Activated CD4-positive, alpha-beta T cell treated with anti-CD3 and anti-CD28 coated beads for 36 hours (primary cell): ENCODE measurements at regions of chr3 and their contacts with region 1.

Region 1: GRCh38 chr3:172530566-172530965 is 7.3 kb upstream of the TNFSF10 start:
- DNase-seq: peak; percentile 24
- ATAC-seq: peak; percentile 78
- H3K4me3 Mint-ChIP-seq: peak overlapping the region; percentile 15
- H3K27ac Mint-ChIP-seq: peak overlapping the region; percentile 48
- H3K4me1 Mint-ChIP-seq: peaks cover 22% of the 10 kb centered on the region
- H3K27me3 Mint-ChIP-seq: no peaks in the 10 kb centered on the region

Region 2: GRCh38 chr3:172511783-172512762 is 18.5 kb before region 1 on chr3:
- CTCF ChIA-PET with region 1: interaction called, 5 read pairs
- POLR2A ChIA-PET with region 1: no interaction called
- intact Hi-C with region 1: loop called in 1 of 2 experiments (anchors 1 kb)
- DNase-seq: peak; percentile 85
- ATAC-seq: peak; percentile 73
- H3K4me3 Mint-ChIP-seq: peak overlapping the region; percentile 67
- H3K27ac Mint-ChIP-seq: peak overlapping the region; percentile 92
- H3K4me1 Mint-ChIP-seq: peaks cover 63% of the 10 kb centered on the region
- H3K27me3 Mint-ChIP-seq: no peaks in the 10 kb centered on the region

Region 3: GRCh38 chr3:172550347-172550943 is 19.9 kb after region 1 on chr3:
- CTCF ChIA-PET with region 1: interaction called, 5 read pairs
- POLR2A ChIA-PET with region 1: interaction called, 3 read pairs
- intact Hi-C with region 1: loop called (anchors 1 to 2 kb)
- DNase-seq: peak; percentile 92
- ATAC-seq: peak; percentile 100
- H3K4me3 Mint-ChIP-seq: no peak overlapping the region
- H3K27ac Mint-ChIP-seq: peak overlapping the region; percentile 82
- H3K4me1 Mint-ChIP-seq: peaks cover 32% of the 10 kb centered on the region
- H3K27me3 Mint-ChIP-seq: no peaks in the 10 kb centered on the region

Region 4: DNA sequence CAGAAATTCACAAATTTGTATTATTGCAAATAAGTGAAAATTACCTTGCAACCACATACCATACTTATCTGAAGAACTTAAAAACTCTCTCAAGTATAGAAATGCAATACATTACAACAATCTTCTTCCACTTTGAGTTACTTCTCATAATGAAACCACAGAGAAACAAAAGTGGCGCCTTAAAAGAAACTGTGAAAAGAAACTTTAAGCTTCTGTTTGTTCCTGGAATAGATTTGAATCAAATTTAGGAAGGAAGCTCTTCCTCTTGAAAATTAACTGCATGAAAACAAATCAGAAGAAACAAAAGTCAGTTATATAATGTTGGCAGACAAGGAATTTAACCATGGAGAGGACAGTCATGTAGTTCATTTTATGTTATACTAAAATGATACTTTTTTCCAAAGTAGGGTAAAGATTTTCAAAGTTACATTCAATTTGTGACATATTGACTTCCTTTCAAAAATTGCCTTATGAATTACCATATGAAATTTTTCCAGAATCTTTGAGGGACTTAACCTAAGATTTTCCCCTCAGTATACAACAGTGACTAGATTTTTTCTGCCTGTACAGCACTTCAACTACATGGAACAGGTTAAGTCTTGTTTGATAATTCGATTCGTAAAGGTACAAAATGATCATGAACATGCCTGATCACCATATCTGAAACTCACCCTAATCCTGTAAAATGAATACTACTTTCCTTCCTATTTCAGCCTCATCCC is 50.3 kb after region 1 on chr3:
- CTCF ChIA-PET with region 1: interaction called, 5 read pairs
- POLR2A ChIA-PET with region 1: no interaction called
- intact Hi-C with region 1: loop called (anchors 1 kb)
- DNase-seq: no peak
- ATAC-seq: peak; percentile 62
- H3K4me3 Mint-ChIP-seq: peak overlapping the region; percentile 20
- H3K27ac Mint-ChIP-seq: peak overlapping the region; percentile 85
- H3K4me1 Mint-ChIP-seq: peaks cover 82% of the 10 kb centered on the region
- H3K27me3 Mint-ChIP-seq: no peaks in the 10 kb centered on the region